GM18951 (cell line): ENCODE measurements at regions of chr21 and their contacts with region 1.

Region 1: GRCh38 chr21:42467140-42467983 is 28.7 kb downstream of the RSPH1 start:
- POLR2A ChIP-seq: no peak

Region 2: GRCh38 chr21:42040411-42041180 is 426.8 kb before region 1 on chr21:
- in situ Hi-C with region 1: no loop called
- POLR2A ChIP-seq: no peak

Region 3: GRCh38 chr21:42537106-42537742 is 69.9 kb after region 1 on chr21:
- in situ Hi-C with region 1: loop called (anchors 10 kb)
- POLR2A ChIP-seq: no peak